Activated naive CD4-positive, alpha-beta T cell treated with anti-CD3 and anti-CD28 coated beads, Interleukin-2, amount 10 ng/mL, durations not matched to agents 7 days and 5 days (primary cell): ENCODE measurements at regions of chr1 and their contacts with region 1.

Region 1: GRCh38 chr1:18902523-18903290 is at the start of gene ALDH4A1:
- DNase-seq: peak; percentile 97
- H3K4me3 Mint-ChIP-seq: peak within 1 kb of the TSS; percentile 95
- H3K27ac Mint-ChIP-seq: peak within 1 kb of the TSS; percentile 95
- H3K4me1 Mint-ChIP-seq: peaks cover 45% of the 10 kb centered on the region
- H3K27me3 Mint-ChIP-seq: no peaks in the 10 kb centered on the region

Region 2: GRCh38 chr1:18668796-18669404 is 233.8 kb before region 1 on chr1:
- CTCF ChIA-PET with region 1: no interaction called
- DNase-seq: no peak
- H3K4me3 Mint-ChIP-seq: no peak overlapping the region
- H3K27ac Mint-ChIP-seq: no peak overlapping the region
- H3K4me1 Mint-ChIP-seq: peaks cover 12% of the 10 kb centered on the region
- H3K27me3 Mint-ChIP-seq: peaks cover 32% of the 10 kb centered on the region

Region 3: GRCh38 chr1:18926315-18927081 is 23.8 kb after region 1 on chr1:
- CTCF ChIA-PET with region 1: interaction called, 30 read pairs
- DNase-seq: peak; percentile 91
- H3K4me3 Mint-ChIP-seq: peak overlapping the region; percentile 85
- H3K27ac Mint-ChIP-seq: peak overlapping the region; percentile 100
- H3K4me1 Mint-ChIP-seq: peaks cover 73% of the 10 kb centered on the region
- H3K27me3 Mint-ChIP-seq: no peaks in the 10 kb centered on the region

Region 4: DNA sequence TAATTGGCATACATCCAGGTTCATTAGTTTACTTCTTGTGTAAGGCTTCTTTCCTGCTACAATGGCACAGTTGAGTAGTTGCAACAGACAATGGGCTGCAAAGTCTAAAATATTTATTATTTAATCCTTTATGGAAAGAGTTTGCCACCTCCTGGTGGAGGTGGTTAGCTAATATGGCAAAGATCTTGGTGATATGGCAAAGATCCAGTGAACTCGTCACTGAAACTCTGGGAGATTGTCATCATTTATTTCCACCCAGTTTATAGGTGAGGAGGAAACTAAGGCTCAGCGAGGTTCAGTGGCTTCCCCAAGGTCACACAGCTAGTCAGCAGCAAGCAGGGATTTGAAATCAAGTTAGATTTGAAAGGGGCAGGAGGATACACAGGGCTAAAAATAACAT is 69.8 kb after region 1 on chr1:
- CTCF ChIA-PET with region 1: interaction called, 16 read pairs
- DNase-seq: peak; percentile 39
- H3K4me3 Mint-ChIP-seq: no peak overlapping the region
- H3K27ac Mint-ChIP-seq: no peak overlapping the region
- H3K4me1 Mint-ChIP-seq: no peaks in the 10 kb centered on the region
- H3K27me3 Mint-ChIP-seq: peaks cover 42% of the 10 kb centered on the region

Region 5: DNA sequence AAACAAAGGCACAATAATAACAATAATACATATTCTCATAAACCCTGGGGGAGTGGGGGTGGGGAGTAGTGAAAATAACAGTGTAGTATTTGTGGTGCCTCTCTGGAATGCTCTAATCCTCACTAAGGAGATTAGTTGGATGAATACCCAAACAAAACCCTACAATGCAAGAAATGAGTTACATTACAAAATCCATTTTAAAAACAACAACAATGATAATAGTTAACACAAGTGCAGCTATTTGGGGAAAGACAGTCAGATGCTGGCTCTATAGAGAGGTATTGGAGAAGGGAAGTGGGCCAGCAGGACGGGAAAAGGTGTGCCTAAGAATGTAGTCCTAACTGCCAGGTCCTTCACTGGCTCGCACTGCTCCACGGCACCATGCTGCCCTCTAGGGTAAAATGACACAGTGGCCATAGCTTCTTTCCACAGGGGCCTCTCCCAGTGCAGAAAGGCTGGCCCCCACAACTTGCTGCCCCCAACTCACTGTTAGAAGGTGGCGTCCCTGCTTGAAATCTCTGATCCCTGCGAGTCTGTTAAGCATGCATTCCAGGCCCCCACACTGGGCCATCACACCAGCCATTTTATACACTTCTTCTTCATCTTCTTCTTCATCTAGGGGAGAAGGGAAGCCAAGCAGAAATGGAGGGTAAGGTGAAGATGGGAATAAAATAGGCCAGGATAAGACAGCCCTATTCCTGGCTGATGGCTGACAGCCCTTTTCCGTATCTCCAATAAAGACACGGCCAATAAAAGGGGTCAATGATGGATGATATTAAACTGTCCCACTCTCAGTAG is 193.5 kb after region 1 on chr1:
- CTCF ChIA-PET with region 1: interaction called, 87 read pairs
- DNase-seq: peak; percentile 49
- H3K4me3 Mint-ChIP-seq: no peak overlapping the region
- H3K27ac Mint-ChIP-seq: no peak overlapping the region
- H3K4me1 Mint-ChIP-seq: no peaks in the 10 kb centered on the region
- H3K27me3 Mint-ChIP-seq: no peaks in the 10 kb centered on the region